SK-N-SH (cell line): ENCODE measurements at regions of chr7 and their contacts with region 1.

Region 1: DNA sequence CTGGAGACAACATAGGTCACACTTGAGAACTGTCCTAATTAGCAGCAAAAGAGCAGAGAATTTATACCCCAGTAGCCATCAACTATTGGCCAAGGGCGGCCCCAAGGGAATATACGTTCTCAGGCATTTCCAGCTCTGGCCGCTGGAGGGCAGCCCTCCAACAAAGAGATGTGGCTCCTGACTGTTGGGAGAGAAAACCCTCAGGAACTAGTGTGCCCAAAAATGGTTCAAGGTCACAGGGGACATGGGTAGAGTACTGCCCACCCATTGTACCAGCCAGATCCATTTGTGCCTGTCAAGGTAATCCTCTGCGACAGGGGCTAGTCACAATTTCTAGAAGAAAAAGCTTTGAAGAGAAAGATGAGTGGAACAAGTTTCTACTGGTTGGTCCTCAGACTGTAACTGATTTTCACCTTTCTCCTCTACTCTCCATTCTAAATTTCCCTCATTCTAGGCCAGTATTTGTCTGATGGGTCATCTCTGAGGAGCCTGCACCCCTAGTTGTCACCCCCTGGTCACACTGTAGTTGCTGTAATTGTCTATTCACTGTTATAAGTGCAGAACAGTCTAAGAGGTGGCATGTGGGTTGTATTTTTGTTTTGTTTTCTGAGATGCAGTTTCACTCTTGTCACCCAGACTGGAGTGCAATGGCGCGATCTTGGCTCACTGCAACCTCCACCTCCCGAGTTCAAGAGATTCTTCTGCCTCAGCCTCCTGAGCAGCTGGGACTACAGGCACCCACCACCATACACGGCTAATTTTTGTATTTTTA is 14.7 kb upstream of the C7orf33 start:
- DNase-seq: peak; percentile 75
- H3K4me3 ChIP-seq: no peak overlapping the region
- H3K27ac ChIP-seq: no peak overlapping the region
- H3K4me1 ChIP-seq: no peaks in the 10 kb centered on the region
- H3K27me3 ChIP-seq: no peaks in the 10 kb centered on the region
- CTCF ChIP-seq: peak; percentile 98
- EP300 ChIP-seq: 0 out of 4 replicates have a peak, but pooled peaks of 1 of the 2 experiments have one; percentile 7
- RAD21 ChIP-seq: peak; percentile 94

Region 2: DNA sequence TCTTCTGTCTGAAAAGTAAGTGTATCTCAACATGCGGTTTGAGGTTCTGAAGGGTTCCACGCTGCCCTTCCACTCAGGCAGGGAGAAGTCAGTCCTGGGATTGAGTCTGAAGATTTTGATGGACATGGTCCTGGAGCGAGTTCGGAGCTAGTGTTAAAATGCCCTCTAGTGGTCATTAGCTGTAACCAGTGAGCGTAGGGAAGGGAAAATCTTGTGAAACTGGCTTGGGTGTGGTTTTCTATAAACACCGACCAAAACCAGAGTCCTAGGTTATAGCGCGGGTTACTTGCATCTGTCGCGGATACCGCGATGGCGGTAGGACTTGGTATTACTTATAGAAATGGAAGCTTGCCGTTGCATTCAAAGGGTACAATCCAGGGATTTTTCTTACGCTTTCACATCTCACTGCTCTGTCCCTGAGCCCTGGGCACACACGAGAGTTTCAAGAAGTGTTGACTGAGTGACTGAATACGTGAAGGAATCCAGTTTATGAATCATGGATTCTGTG is 333.5 kb before region 1 on chr7:
- CTCF ChIA-PET with region 1: no interaction called
- POLR2A ChIA-PET with region 1: no interaction called
- DNase-seq: peak; percentile 67
- H3K4me3 ChIP-seq: peak overlapping the region in 1 of 2 experiments; percentile 16; a peak in 1 of 4 replicates
- H3K27ac ChIP-seq: no peak overlapping the region
- H3K4me1 ChIP-seq: no peaks in the 10 kb centered on the region; a peak in 1 of 4 replicates
- H3K27me3 ChIP-seq: no peaks in the 10 kb centered on the region
- CTCF ChIP-seq: peak; percentile 98
- EP300 ChIP-seq: no peak
- RAD21 ChIP-seq: peak; percentile 92

Region 3: DNA sequence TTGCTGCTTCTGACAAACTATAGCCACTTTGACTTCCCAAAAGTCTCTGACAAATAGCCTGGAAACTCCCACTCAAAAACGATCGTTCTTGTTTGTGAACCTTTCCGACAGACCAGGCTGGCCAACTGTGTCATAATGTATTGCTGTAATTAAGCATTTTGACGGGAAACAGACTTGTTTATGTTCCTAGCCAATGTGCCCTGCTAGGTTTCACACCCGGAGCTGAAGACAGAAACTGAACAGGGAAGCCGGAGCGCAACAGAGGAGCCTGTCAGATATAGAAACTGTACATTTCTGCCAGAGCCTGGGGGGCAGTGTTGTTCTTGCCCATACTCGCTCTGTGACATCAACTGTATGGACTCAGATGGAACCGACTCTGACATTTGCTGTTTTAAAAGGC is 40.6 kb before region 1 on chr7:
- CTCF ChIA-PET with region 1: interaction called, 20 read pairs
- POLR2A ChIA-PET with region 1: no interaction called
- DNase-seq: peak; percentile 55
- H3K4me3 ChIP-seq: peak overlapping the region; percentile 33 to 44
- H3K27ac ChIP-seq: peak overlapping the region in 1 of 2 experiments; percentile 19; a peak in 1 of 4 replicates
- H3K4me1 ChIP-seq: peaks cover 4 to 7% of the 10 kb centered on the region in 2 experiments; a peak in 2 of 4 replicates
- H3K27me3 ChIP-seq: no peaks in the 10 kb centered on the region
- CTCF ChIP-seq: peak; percentile 48
- EP300 ChIP-seq: no peak
- RAD21 ChIP-seq: peak; percentile 54

Region 4: GRCh38 chr7:148556924-148557323 is 18.9 kb before region 1 on chr7:
- CTCF ChIA-PET with region 1: interaction called, 48 read pairs
- POLR2A ChIA-PET with region 1: no interaction called
- DNase-seq: no peak
- H3K4me3 ChIP-seq: no peak overlapping the region
- H3K27ac ChIP-seq: no peak overlapping the region
- H3K4me1 ChIP-seq: no peaks in the 10 kb centered on the region
- H3K27me3 ChIP-seq: no peaks in the 10 kb centered on the region
- CTCF ChIP-seq: no peak
- EP300 ChIP-seq: no peak
- RAD21 ChIP-seq: no peak

Region 5: DNA sequence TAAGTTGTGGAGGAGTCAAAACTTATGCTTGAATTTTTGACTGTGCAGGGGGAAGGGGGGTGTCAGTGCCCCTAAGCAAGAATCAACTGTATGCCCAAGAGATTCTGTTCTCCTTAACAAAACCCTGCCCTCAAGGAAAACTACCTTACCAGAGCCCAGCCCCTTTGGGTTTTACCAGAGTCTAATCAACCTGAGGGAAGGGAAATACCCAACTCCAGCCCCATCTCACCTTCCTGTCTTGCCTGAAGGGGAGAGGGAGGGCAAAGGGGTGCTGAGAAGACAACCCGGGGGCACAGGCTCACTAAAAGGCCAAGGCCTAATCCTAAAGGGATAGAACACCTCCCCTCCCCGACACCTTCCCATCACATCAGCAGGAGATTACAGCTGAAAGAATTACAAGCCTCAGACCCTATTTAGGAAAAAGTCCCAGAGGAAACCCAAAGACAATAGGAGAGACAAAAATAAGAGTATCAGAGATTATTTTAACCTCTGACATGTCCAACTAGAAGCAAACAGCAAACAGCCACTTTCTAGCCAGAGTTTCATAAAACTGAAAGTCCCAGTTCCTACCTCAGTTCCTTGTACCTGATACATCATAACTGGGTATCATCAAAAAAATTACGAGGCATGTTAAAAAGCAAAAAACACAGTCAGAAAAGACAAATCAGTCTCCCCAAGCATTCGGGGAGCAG is 12.1 kb before region 1 on chr7:
- CTCF ChIA-PET with region 1: interaction called, 48 read pairs
- POLR2A ChIA-PET with region 1: no interaction called
- DNase-seq: no peak
- H3K4me3 ChIP-seq: peak overlapping the region in 1 of 2 experiments; percentile 43; a peak in 2 of 4 replicates
- H3K27ac ChIP-seq: peak overlapping the region; percentile 13 to 79; a peak in 3 of 4 replicates
- H3K4me1 ChIP-seq: no peaks in the 10 kb centered on the region; a peak in 2 of 4 replicates
- H3K27me3 ChIP-seq: no peaks in the 10 kb centered on the region
- CTCF ChIP-seq: no peak
- EP300 ChIP-seq: no peak
- RAD21 ChIP-seq: no peak

Region 6: GRCh38 chr7:148623586-148624282 is 47.9 kb after region 1 on chr7:
- CTCF ChIA-PET with region 1: interaction called, 10 read pairs
- POLR2A ChIA-PET with region 1: no interaction called
- DNase-seq: no peak
- H3K4me3 ChIP-seq: no peak overlapping the region
- H3K27ac ChIP-seq: no peak overlapping the region; a peak in 1 of 4 replicates
- H3K4me1 ChIP-seq: peaks cover 0 to 22% of the 10 kb centered on the region in 2 experiments; a peak in 2 of 4 replicates
- H3K27me3 ChIP-seq: no peaks in the 10 kb centered on the region
- CTCF ChIP-seq: no peak
- EP300 ChIP-seq: no peak
- RAD21 ChIP-seq: no peak

Region 7: DNA sequence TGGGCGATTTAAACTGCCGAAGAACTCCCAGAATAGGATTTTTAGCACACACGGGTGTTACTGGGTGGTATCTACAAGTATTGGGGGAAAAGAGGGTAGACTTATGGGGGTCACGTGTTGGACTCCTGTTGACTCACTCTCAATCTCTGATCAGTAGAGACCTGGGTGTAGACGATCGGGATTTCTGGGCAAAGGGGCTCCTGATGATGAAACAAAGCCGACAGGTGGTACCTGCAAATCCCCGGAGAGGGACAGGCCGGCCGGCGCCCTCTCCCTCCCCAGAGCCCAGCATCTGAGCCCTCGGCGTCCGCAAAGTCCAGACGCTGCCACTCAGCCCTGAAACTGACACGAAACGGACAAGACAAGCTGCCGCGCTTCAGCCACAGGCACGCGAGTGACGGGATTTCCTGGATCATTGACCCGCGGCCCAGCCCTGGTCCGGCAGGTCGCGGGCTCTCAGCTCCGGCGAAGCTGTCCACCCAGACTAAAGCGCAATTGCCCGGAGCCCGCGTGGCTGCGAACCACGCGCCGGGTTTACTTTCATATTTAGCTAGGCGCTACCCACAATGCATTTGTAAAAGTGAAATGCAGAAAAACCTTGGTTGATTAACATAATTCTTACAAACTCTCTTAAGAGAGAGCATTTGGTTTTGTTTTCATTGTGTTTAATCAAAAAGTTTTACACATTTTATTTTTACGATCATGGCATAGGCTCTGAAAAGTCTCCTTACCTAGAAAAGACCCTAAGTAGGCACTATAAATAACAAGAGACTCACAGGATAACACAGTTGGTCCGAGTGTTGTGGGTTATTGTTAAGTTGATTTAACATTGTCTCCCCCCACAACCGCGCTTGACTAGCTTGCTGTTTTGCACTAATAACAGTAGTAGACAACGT is 365.1 kb after region 1 on chr7:
- CTCF ChIA-PET with region 1: interaction called, 20 read pairs
- POLR2A ChIA-PET with region 1: no interaction called
- DNase-seq: peak; percentile 88
- H3K4me3 ChIP-seq: peak overlapping the region; percentile 65 to 83
- H3K27ac ChIP-seq: peak overlapping the region; percentile 76 to 91
- H3K4me1 ChIP-seq: peaks cover 0 to 6% of the 10 kb centered on the region in 2 experiments; a peak in 2 of 4 replicates
- H3K27me3 ChIP-seq: no peaks in the 10 kb centered on the region
- CTCF ChIP-seq: no peak
- EP300 ChIP-seq: peak in 1 of 2 experiments; percentile 59; a peak in 1 of 4 replicates
- RAD21 ChIP-seq: 0 out of 2 replicates have a peak, but pooled peaks have one; percentile 10